Aorta (tissue), 5 donors: ENCODE measurements at regions of chr6 and their contacts with region 1.

Region 1: GRCh38 chr6:106300944-106301343 is 24.6 kb downstream of the ATG5 start:
- DNase-seq: no peak
- ATAC-seq: no peak
- H3K4me3 ChIP-seq: no peak overlapping the region
- H3K27ac ChIP-seq: no peak overlapping the region
- H3K4me1 ChIP-seq: no peaks in the 10 kb centered on the region
- H3K27me3 ChIP-seq: no peaks in the 10 kb centered on the region

Region 2: DNA sequence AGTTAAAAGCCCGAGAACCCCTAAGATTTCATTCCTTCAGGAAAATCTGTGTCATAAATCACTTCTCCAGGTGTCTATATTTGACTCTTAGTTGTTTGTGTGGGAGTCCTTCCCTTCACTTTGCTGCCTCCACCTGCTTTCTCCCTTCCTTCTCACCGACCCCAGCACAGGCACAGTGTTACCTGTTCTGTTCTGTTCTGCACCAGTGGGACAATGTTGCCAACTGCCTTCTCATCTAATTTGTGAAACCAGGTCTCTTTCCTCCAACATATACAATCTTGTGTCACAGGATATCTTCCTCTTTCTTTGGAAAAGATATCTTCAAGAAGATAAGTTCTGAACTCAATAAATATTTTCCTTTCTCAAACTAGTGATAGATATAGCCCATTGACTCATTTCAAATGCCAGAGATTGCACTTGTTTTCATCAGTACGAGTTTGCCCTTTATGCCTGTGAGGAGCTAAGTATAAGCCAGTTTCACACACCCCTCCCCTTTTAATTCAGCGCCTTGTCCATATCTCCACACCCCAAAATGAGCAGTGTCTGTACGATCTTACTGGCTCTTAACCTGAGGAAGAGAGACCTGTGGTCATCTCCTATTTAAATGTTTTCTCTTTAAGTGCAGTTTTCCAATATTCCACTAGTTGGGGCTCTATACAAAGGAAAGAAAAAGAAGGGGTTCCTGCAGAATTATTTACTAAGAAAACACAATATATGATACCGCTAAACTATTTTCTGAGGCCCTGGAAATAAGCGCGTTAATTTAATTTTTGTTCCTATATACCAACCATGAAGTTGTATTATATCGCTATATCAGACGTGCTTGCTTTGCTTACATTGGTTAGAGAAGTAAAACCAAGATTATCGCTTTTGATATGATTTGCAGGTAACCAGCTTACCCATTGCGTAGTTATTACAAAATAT is 816.4 kb before region 1 on chr6:
- intact Hi-C with region 1: loop called in 1 of 2 experiments (anchors 10 kb)
- DNase-seq: no peak
- ATAC-seq: peak; percentile 70
- H3K4me3 ChIP-seq: no peak overlapping the region
- H3K27ac ChIP-seq: no peak overlapping the region
- H3K4me1 ChIP-seq: peaks cover 0 to 2% of the 10 kb centered on the region in 2 donors
- H3K27me3 ChIP-seq: no peaks in the 10 kb centered on the region